ENCODE measurements at regions of chr2 and their contacts with region 1.

Region 1: DNA sequence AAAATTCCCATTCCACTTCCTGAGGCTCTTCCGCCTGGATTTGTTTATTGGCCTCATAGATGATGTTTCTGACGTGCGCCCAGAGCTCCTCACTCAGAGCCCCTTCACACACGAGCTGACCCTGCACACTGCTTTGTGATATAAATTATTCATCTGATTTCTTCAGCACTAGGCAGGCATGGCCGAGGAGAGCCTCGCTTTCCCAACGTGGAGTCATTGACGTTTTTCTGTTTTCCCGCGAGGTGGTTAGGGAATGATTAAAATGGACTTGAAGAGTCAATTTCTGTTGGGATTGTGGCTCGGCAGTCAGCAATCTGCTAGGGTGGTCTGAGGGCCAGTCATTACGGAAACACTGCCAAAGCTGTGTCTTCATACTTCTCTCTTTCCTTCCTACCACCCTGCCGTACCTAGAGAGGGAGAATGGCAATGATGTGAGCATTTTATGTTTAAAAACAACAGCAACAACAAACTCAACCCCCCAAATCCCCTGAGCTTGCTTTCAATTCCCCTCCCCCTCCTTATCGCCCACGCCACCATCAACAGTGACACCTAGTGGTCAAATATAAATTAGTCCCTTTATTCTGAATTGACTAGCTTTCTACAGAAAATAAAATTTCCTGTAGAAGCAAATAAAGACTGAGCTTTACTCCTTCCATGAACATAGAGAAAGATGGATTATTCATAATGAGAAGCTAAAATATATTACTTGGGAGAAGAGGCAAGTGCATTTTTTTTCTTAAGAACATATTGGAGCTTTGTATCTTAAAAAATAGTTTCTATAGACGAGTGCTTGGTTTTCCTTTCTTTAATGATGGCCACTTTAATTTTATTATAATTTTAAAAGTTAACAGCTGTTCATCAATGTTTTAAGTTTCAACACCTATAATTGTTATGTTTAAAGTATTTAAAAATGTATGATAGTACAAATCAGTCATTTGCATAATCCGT is 285.1 kb downstream of the MTX2 start:
- DNase-seq: peak; percentile 68
- CTCF ChIP-seq: peak; percentile 56

Region 2: GRCh38 chr2:176534798-176535466 is 19.4 kb before region 1 on chr2:
- CTCF ChIA-PET with region 1: interaction called, 15 read pairs
- POLR2A ChIA-PET with region 1: no interaction called
- DNase-seq: no peak
- CTCF ChIP-seq: no peak

Region 3: GRCh38 chr2:176542476-176542875 is 11.9 kb before region 1 on chr2:
- CTCF ChIA-PET with region 1: interaction called, 12 read pairs
- POLR2A ChIA-PET with region 1: no interaction called
- DNase-seq: no peak
- CTCF ChIP-seq: no peak

Region 4: DNA sequence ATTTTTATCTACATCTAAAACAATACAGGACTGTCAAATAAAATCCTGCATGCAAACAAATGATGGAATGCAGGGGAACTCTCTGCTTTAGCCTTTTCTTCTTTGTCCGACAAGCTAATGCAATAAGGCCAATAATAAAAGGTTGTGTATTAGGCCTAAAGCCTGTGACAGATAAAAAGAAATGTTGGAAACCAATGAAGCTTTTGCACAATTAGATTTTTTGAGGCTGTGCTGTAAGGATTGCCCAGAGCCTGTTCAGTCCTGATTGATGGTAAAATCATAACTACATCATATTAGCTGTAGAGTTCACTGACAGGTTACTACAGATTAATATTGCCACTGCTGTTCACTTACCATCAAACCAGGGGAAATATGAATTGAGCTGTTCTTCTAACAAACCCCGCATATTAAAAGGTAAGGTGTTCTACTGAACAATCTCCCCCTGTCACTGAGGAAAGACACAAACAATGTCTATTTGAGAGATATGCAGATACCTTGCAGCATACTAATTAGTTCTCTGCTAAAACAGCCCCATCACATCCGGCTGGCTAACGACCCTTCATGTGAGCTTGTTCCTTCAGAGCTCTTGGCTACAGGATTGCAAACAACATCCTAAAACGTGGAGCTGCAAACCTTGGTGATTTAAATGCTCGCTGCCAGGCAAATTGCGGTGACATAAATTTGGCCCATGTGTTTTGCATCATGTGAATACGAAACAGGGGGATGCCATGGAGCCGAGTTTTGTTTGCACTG is 20.3 kb after region 1 on chr2:
- CTCF ChIA-PET with region 1: interaction called, 34 read pairs
- POLR2A ChIA-PET with region 1: no interaction called
- DNase-seq: no peak
- CTCF ChIP-seq: no peak